CD4-positive, alpha-beta T cell (primary cell): ENCODE measurements at regions of chr13 and their contacts with region 1.

Region 1: DNA sequence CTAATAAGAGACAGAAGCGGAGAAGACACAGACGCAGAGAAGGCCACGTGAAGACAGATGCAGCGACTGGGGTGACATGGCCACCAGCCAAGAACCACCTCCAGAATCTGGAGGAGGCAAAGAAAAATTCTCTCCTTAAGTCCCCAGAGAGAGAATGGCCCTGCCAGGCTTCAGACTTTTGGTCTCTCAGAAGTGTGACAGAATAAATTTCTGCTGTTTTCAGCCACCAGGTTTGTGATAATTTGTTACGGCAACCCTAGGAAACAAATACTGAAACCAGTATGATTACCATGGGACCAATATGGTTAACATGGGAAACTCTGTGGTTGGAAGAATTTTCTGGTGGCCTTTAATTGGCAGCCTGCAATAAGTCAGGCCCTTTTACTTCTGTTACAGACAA is 63.9 kb upstream of the DOCK9 start:
- DNase-seq: no peak
- ATAC-seq: no peak
- H3K4me3 ChIP-seq: no peak overlapping the region
- H3K4me3 Mint-ChIP-seq: no peak overlapping the region
- H3K27ac ChIP-seq: peak overlapping the region in 1 of 2 donors; percentile 26
- H3K27ac Mint-ChIP-seq: peak overlapping the region; percentile 95
- H3K4me1 ChIP-seq: peaks cover 64% of the 10 kb centered on the region
- H3K4me1 Mint-ChIP-seq: peaks cover 87% of the 10 kb centered on the region
- H3K27me3 ChIP-seq: no peaks in the 10 kb centered on the region
- H3K27me3 Mint-ChIP-seq: no peaks in the 10 kb centered on the region
- CTCF ChIP-seq: no peak

Region 2: DNA sequence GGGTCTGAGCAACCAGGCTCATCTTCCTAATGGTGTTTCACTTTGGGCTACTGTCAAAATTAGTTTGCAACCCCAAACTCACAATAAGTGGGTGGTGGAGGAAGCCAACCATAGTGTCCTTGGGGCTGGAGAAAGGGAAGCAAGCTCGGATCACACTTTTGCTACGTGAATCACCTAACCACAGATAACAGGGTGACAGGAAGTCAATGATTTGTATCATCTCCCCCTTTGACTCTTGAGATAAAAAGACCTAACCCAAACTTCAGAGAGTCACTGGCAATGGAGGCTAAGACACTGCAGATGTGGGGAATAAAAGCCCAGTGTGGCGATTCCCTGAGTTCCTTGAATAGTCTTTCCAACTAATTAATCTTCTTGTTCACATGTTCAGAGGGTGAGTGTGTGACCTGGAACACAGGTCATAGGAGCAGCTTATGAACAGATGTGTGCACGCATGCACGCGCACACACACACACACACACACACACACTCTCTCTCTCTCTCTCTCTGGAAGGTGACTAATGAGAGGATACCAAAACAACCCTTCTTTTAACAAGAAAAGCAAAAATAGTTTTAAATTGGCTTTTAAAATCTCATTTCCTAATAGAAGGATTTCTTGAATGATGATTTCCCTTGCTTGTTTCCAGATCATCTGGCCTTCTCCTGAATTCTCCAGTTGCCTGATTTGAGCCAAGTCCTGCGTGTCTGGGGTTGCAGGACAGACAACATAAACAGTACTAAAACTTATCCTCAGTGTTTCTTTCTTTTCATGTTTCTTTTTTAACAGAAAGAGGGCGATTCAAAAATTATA is 42.8 kb before region 1 on chr13:
- CTCF ChIA-PET with region 1: no interaction called
- POLR2A ChIA-PET with region 1: interaction called, 4 read pairs
- intact Hi-C with region 1: loop called in 1 of 2 experiments (anchors 5 kb)
- DNase-seq: peak in 10 of 14 experiments; percentile 9 to 73 (median 29)
- ATAC-seq: peak; percentile 71
- H3K4me3 ChIP-seq: no peak overlapping the region
- H3K4me3 Mint-ChIP-seq: peak overlapping the region; percentile 85
- H3K27ac ChIP-seq: peak overlapping the region in 1 of 2 donors; percentile 14
- H3K27ac Mint-ChIP-seq: peak overlapping the region; percentile 94
- H3K4me1 ChIP-seq: peaks cover 81% of the 10 kb centered on the region
- H3K4me1 Mint-ChIP-seq: peaks cover 99% of the 10 kb centered on the region
- H3K27me3 ChIP-seq: no peaks in the 10 kb centered on the region
- H3K27me3 Mint-ChIP-seq: no peaks in the 10 kb centered on the region
- CTCF ChIP-seq: no peak

Region 3: GRCh38 chr13:99075268-99076191 is 33.7 kb after region 1 on chr13:
- CTCF ChIA-PET with region 1: no interaction called
- POLR2A ChIA-PET with region 1: interaction called, 12 read pairs
- intact Hi-C with region 1: no loop called
- DNase-seq: peak in 3 of 14 experiments; percentile 58 to 81 (median 62)
- ATAC-seq: peak; percentile 76
- H3K4me3 ChIP-seq: peak overlapping the region; percentile 24
- H3K4me3 Mint-ChIP-seq: peak overlapping the region; percentile 18
- H3K27ac ChIP-seq: peak overlapping the region; percentile 37 to 61
- H3K27ac Mint-ChIP-seq: peak overlapping the region; percentile 84
- H3K4me1 ChIP-seq: peaks cover 45% of the 10 kb centered on the region
- H3K4me1 Mint-ChIP-seq: peaks cover 92% of the 10 kb centered on the region
- H3K27me3 ChIP-seq: no peaks in the 10 kb centered on the region
- H3K27me3 Mint-ChIP-seq: no peaks in the 10 kb centered on the region
- CTCF ChIP-seq: no peak